Posterior cingulate gyrus (tissue), 11 donors: ENCODE measurements at regions of chr20 and their contacts with region 1.

Region 1: DNA sequence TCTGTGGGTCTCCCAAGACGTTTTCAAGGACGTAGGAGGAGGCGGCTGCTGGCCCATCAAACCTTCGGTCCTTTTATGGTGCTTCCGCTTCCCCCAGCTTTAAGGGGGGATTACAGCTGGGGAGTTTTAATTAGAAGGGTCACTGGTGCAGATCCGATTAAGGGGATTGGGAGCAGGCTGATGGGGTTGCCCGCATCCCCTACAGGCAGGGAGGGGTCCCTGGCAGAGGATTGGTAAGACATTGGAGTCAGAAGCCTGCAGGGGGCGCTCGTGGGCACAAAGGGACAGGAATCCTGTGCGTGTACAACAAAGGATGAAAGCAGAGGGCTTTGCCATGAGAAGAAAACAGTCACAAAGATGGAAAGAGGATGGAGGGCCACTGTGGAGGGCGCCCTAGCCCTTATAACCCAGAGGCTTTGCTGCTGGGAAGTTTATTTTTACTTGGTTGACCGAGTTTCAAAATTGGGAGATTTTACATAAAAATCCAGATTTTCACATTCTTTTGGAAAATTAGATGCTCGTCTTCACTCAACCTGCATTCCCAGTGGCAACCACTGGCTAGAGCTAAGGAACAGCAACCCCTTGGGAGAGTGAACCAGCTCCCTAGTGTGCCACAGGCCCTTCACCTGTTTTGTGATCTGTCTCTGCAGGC is 97.9 kb downstream of the KCNB1 start:
- DNase-seq: peak; percentile 42 to 97 (median 78)

Region 2: GRCh38 chr20:49484180-49485140 is 99.9 kb after region 1 on chr20:
- intact Hi-C with region 1: loop called (anchors 10 kb)
- DNase-seq: peak; percentile 68 to 98 (median 86)

Region 3: GRCh38 chr20:49846206-49846807 is 461.7 kb after region 1 on chr20:
- intact Hi-C with region 1: no loop called
- DNase-seq: peak in 1 of 10 donors; percentile 54